Mammary epithelial cell (primary cell): ENCODE measurements at regions of chr4 and their contacts with region 1.

Region 1: GRCh38 chr4:84286048-84286447 is 213.0 kb downstream of the NKX6-1 start:
- DNase-seq: no peak
- H3K4me3 ChIP-seq: no peak overlapping the region
- H3K27ac ChIP-seq: no peak overlapping the region
- H3K4me1 ChIP-seq: no peaks in the 10 kb centered on the region
- H3K27me3 ChIP-seq: no peaks in the 10 kb centered on the region
- CTCF ChIP-seq: no peak

Region 2: GRCh38 chr4:84238247-84239090 is 47.6 kb before region 1 on chr4:
- CTCF ChIA-PET with region 1: no interaction called
- dilution Hi-C with region 1: no loop called
- in situ Hi-C with region 1: no loop called
- intact Hi-C with region 1: loop called (anchors 1 kb)
- DNase-seq: peak; percentile 26
- H3K4me3 ChIP-seq: no peak overlapping the region
- H3K27ac ChIP-seq: no peak overlapping the region
- H3K4me1 ChIP-seq: no peaks in the 10 kb centered on the region
- H3K27me3 ChIP-seq: no peaks in the 10 kb centered on the region
- CTCF ChIP-seq: no peak

Region 3: DNA sequence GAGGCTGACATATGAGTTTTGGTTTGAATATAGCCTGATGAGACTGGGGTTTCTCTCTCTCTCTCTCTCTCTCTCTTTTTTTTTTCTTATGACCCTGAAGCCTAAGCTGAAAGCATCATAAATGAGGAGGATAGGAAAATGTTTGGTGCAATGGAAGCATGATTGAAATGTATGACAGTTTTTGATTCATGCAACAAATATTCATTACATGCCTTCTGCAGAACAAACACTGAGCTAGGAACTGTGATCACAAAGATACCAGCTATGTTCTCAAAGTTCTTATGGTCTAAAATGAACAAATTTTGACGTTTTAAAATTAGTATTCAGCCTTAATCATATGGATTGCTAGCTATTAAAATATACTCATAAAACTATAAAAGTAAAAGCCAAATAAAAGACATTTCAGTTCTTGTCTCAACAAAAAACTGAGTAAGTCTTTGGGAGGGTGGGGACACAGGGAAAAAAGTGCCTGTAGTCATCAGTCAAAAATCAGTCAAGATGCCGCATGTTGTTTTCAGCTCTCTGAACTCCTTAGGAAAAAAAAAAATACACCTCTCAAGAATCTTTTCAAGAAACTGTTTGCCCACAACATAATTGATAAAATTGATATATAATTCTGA is 155.8 kb after region 1 on chr4:
- CTCF ChIA-PET with region 1: no interaction called
- dilution Hi-C with region 1: no loop called
- in situ Hi-C with region 1: no loop called
- intact Hi-C with region 1: no loop called
- DNase-seq: no peak
- H3K4me3 ChIP-seq: no peak overlapping the region
- H3K27ac ChIP-seq: no peak overlapping the region
- H3K4me1 ChIP-seq: no peaks in the 10 kb centered on the region
- H3K27me3 ChIP-seq: peaks cover 8% of the 10 kb centered on the region
- CTCF ChIP-seq: no peak